Cardiac septum (tissue), 1 donor: ENCODE measurements at regions of chr2 and their contacts with region 1.

Region 1: DNA sequence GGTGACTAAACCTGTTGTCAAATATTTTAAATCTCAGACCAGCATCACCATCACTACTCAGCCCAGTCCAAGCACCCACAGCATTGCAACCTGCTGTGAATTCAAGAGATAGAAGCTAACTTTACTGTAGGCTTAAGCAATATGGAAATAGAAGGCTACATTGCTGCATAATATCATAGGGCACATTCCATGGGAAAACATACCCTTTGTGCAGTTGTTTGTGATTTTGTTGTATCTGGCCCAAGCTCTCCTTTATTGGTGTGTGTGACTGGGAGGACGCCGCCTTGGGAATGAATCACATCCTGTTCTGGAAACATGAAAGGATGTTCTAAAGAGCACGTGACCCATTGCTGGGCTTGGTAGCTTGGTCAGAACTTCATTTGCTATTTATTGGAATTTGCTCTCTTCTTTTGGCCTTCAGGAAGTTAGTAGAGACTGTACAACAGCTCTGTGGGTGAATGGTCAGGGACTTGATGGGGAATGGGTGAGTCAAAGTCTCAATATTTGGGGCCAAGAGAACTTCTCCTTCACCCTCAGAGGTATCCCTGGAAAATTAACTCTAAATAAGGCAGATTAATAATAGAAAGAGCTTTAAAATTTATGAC is 106.8 kb upstream of the SERPINE2 start:
- DNase-seq: no peak

Region 2: DNA sequence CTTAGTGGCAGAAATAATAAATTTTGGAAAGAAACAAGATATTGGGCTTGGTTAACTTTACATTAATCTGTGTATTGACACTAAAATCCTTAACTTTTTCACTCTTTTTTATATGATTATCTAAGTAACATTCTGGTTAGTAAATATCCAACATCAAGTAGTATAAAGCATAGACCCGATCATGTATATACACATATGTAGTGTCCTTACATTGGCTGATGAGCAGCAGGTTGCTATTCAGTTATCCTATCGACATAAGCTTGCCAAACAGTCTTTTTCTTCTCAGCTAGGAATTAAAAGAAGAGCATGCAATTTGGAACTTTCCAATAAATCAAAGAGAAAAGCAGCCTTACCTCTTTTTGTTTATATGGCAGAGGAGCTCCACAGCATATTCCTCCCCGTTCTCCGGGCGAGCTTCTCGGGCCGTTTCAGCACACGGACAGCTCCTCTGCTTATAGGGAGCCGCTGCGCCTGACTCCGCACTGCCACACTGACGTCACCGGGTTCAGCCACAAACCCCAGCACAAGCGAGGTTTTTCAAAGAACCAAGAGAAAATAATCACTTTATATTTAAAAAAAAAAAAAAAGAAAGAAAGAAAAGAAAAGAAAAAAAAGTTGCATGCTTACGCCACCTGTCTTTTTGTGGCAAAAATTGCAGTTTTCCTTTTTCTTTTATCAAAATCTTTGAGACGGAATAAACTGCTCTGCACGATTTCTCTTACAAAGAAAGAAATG is 543.8 kb before region 1 on chr2 and contains the start of gene SCG2:
- intact Hi-C with region 1: no loop called
- DNase-seq: peak; percentile 85
- total RNA-seq, gene SCG2: 0.97 TPM

Region 3: GRCh38 chr2:223993621-223994232 is 152.1 kb before region 1 on chr2:
- intact Hi-C with region 1: loop called (anchors 10 kb)
- DNase-seq: no peak

Region 4: DNA sequence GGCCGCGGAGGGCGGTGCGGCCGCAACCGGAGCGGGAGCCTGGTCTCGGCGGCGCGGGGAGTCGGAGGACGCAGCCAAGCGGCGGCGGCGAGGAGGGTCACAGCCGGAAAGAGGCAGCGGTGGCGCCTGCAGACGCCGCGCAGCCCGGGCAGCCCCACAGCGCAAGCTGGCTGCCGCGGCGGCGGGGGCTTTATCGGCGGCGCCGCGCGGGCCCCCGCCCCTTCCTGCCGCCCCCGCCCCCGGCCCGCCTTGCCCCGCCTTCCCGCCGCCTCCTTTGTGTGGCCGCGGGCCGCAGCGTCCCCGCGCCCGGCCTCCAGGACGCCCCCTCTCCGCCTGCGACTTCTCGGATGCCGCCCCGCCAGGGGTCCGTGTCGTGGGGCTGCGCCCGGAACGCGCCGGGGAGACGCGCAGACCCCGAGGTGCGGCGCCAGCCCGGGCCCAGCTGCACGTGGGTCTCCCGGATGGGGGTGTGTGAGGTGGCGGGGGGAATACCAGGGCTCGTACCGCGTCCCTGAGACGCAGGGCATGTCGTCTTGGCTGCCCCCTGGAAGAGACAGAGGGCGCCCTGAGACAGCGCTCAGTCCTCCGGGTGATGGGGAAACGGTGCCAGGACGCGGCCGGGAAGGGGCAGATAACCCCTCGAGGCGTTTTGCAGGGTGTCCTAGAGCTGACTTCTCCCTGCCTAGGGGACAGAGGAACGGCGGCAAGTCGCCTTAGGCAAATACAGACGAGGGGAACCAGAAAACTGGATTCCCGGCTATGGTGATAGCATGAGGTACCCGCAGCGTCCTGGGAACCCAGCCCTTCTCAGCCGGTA is 106.5 kb before region 1 on chr2 and contains the start of gene SERPINE2:
- intact Hi-C with region 1: loop called (anchors 5 kb)
- DNase-seq: peak; percentile 78
- total RNA-seq, gene SERPINE2: 91.5 TPM

Region 5: GRCh38 chr2:224101820-224102630 is 43.8 kb before region 1 on chr2:
- intact Hi-C with region 1: loop called (anchors 5 kb)
- DNase-seq: no peak